Activated T-helper 1 cell treated with anti-CD3 and anti-CD28 coated beads, Interleukin-12 subunit alpha, Interleukin-12 subunit beta, Interleukin-2, Interleukin-4 antibody, amounts not matched to agents 30 ng/mL and 10 ng/mL and 1 ng/mL, durations not matched to agents 14 hours and 24 hours and 36 hours (primary cell): ENCODE measurements at regions of chr3 and their contacts with region 1.

Region 1: GRCh38 chr3:158790901-158791589 is 10.8 kb upstream of the MFSD1 start:
- DNase-seq: no peak
- H3K4me3 Mint-ChIP-seq: peak overlapping the region; percentile 71
- H3K27ac Mint-ChIP-seq: peak overlapping the region; percentile 16
- H3K4me1 Mint-ChIP-seq: peaks cover 5% of the 10 kb centered on the region
- H3K27me3 Mint-ChIP-seq: peaks cover 7% of the 10 kb centered on the region

Region 2: GRCh38 chr3:157606011-157606851 is 1184.8 kb before region 1 on chr3:
- intact Hi-C with region 1: loop called (anchors 5 kb)
- DNase-seq: peak; percentile 30
- H3K4me3 Mint-ChIP-seq: no peak overlapping the region
- H3K27ac Mint-ChIP-seq: no peak overlapping the region
- H3K4me1 Mint-ChIP-seq: peaks cover 4% of the 10 kb centered on the region
- H3K27me3 Mint-ChIP-seq: peaks cover 5% of the 10 kb centered on the region

Region 3: GRCh38 chr3:158644345-158644908 is 146.6 kb before region 1 on chr3 and contains the start of gene GFM1:
- intact Hi-C with region 1: loop called (anchors 5 kb)
- DNase-seq: peak; percentile 87
- H3K4me3 Mint-ChIP-seq: peak within 1 kb of the TSS; percentile 88
- H3K27ac Mint-ChIP-seq: peak within 1 kb of the TSS; percentile 83
- H3K4me1 Mint-ChIP-seq: peaks cover 34% of the 10 kb centered on the region
- H3K27me3 Mint-ChIP-seq: no peaks in the 10 kb centered on the region
- total RNA-seq, gene GFM1: 70.4 and 71.7 TPM in 2 replicates

Region 4: GRCh38 chr3:158672293-158673176 is 118.5 kb before region 1 on chr3 and contains the start of gene LXN:
- intact Hi-C with region 1: loop called (anchors 1 kb)
- DNase-seq: peak; percentile 75
- H3K4me3 Mint-ChIP-seq: peak within 1 kb of the TSS; percentile 91
- H3K27ac Mint-ChIP-seq: peak within 1 kb of the TSS; percentile 90
- H3K4me1 Mint-ChIP-seq: peaks cover 24% of the 10 kb centered on the region
- H3K27me3 Mint-ChIP-seq: no peaks in the 10 kb centered on the region
- total RNA-seq, gene LXN: 16.4 and 17.7 TPM in 2 replicates

Region 5: GRCh38 chr3:158801696-158802408 is 10.8 kb after region 1 on chr3 and contains the start of gene MFSD1:
- intact Hi-C with region 1: loop called (anchors 1 kb)
- DNase-seq: peak; percentile 87
- H3K4me3 Mint-ChIP-seq: peak within 1 kb of the TSS; percentile 89
- H3K27ac Mint-ChIP-seq: peak within 1 kb of the TSS; percentile 65
- H3K4me1 Mint-ChIP-seq: peaks cover 17% of the 10 kb centered on the region
- H3K27me3 Mint-ChIP-seq: peaks cover 14% of the 10 kb centered on the region
- total RNA-seq, gene MFSD1: 21.2 and 26.0 TPM in 2 replicates

Region 6: GRCh38 chr3:159128628-159129027 is 337.6 kb after region 1 on chr3:
- intact Hi-C with region 1: no loop called
- DNase-seq: no peak
- H3K4me3 Mint-ChIP-seq: no peak overlapping the region
- H3K27ac Mint-ChIP-seq: no peak overlapping the region
- H3K4me1 Mint-ChIP-seq: no peaks in the 10 kb centered on the region
- H3K27me3 Mint-ChIP-seq: no peaks in the 10 kb centered on the region